Activated B cell treated with CpG ODN at 0.5 μM for 24 hours (primary cell): ENCODE measurements at regions of chr6 and their contacts with region 1.

Region 1: GRCh38 chr6:32622545-32623401 is 14.4 kb upstream of the HLA-DQA1 start:
- DNase-seq: peak; percentile 42
- ATAC-seq: peak; percentile 75
- H3K4me3 Mint-ChIP-seq: peak overlapping the region; percentile 80
- H3K27ac Mint-ChIP-seq: peak overlapping the region; percentile 100
- H3K4me1 Mint-ChIP-seq: peaks cover 75% of the 10 kb centered on the region
- H3K27me3 Mint-ChIP-seq: no peaks in the 10 kb centered on the region
- CTCF ChIP-seq: no peak

Region 2: GRCh38 chr6:32327103-32327502 is 295.7 kb before region 1 on chr6:
- CTCF ChIA-PET with region 1: no interaction called
- POLR2A ChIA-PET with region 1: no interaction called
- intact Hi-C with region 1: no loop called
- DNase-seq: no peak
- ATAC-seq: peak; percentile 89
- H3K4me3 Mint-ChIP-seq: peak overlapping the region; percentile 44
- H3K27ac Mint-ChIP-seq: peak overlapping the region; percentile 69
- H3K4me1 Mint-ChIP-seq: peaks cover 25% of the 10 kb centered on the region
- H3K27me3 Mint-ChIP-seq: no peaks in the 10 kb centered on the region
- CTCF ChIP-seq: no peak

Region 3: GRCh38 chr6:32432050-32432450 is 190.7 kb before region 1 on chr6:
- CTCF ChIA-PET with region 1: interaction called, 6 read pairs
- POLR2A ChIA-PET with region 1: interaction called, 5 read pairs
- intact Hi-C with region 1: loop called (anchors 1 kb)
- DNase-seq: no peak
- ATAC-seq: peak; percentile 43
- H3K4me3 Mint-ChIP-seq: no peak overlapping the region
- H3K27ac Mint-ChIP-seq: peak overlapping the region; percentile 24
- H3K4me1 Mint-ChIP-seq: peaks cover 33% of the 10 kb centered on the region
- H3K27me3 Mint-ChIP-seq: no peaks in the 10 kb centered on the region
- CTCF ChIP-seq: peak; percentile 65

Region 4: DNA sequence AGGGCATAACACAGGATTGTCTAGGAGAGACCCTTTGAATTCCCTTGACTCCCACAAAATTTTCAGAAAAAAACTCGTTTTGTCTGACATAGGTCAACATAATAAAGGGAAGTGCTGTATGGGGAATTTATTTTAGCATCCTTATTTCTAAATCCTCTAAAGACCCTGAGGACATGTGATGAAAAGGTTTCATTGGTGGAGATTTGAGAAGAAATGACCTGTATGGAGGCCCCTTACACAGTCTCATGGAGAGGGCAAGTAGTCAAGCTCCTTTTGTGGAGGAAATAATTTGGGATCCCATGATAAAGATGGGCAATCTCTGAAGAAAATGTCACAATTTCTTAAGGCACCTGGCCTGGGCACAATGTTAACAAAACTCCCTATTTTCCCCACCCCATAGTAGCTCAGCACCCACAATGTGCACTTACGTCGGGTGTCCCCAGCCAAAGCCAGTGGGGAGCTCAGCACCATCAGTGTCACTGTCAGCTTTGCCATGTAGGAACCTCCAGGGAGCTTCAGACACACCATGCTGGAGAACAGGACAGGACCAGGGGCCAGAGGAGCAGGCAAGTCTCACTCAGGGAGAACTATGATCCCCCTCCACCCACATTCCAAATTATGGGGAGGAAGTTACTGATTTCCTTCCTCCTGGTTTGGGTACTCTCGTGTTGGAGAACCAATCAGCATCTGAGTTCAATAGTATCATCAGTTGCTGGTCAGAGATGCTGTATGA is 92.9 kb before region 1 on chr6 and contains the start of gene HLA-DRB5:
- CTCF ChIA-PET with region 1: no interaction called
- POLR2A ChIA-PET with region 1: interaction called, 49 read pairs
- intact Hi-C with region 1: no loop called
- DNase-seq: peak; percentile 20
- ATAC-seq: peak; percentile 76
- H3K4me3 Mint-ChIP-seq: peak within 1 kb of the TSS; percentile 92
- H3K27ac Mint-ChIP-seq: peak within 1 kb of the TSS; percentile 99
- H3K4me1 Mint-ChIP-seq: peaks cover 28% of the 10 kb centered on the region
- H3K27me3 Mint-ChIP-seq: no peaks in the 10 kb centered on the region
- CTCF ChIP-seq: no peak
- total RNA-seq, gene HLA-DRB5: 196 and 199 TPM in 2 replicates

Region 5: GRCh38 chr6:32604434-32604877 is 18.3 kb before region 1 on chr6:
- CTCF ChIA-PET with region 1: interaction called, 4 read pairs
- POLR2A ChIA-PET with region 1: interaction called, 312 read pairs
- intact Hi-C with region 1: loop called (anchors 1 kb)
- DNase-seq: no peak
- ATAC-seq: peak; percentile 68
- H3K4me3 Mint-ChIP-seq: peak overlapping the region; percentile 74
- H3K27ac Mint-ChIP-seq: peak overlapping the region; percentile 93
- H3K4me1 Mint-ChIP-seq: peaks cover 76% of the 10 kb centered on the region
- H3K27me3 Mint-ChIP-seq: no peaks in the 10 kb centered on the region
- CTCF ChIP-seq: no peak

Region 6: DNA sequence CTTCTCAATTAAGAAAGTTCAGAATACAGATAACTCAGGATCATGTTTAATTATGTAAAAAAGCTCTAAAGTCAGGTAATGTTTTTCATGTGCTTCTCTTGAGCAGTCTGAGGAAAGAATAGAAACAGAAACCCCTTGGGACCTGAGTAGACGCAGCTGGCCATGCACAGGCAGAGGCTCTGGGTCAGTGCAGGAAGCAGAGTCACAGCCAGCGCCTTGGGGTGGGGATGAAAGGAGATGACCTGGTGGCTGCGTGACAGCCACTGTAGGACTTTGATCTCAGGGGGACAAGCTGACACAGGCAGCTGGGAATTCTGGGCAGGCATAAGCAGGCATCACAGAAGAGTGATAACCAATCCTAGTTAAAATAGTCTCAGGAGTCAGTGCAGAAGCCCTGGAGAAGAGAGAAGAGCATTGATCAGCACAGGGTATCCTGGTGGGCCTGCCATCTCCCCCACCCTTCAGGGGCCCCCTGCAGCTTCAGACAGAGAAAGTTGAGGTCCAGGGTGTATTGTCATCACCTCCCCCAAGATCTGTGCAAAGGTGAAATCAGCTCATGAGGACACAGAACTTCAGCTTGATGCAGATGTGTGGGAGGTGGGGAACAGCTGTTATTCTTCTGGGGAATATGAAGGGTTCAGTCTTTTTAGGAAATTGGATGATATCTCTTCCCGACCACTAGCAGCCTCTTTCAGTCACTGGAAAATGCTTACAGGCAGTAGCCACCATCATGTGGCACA is 37.3 kb after region 1 on chr6:
- CTCF ChIA-PET with region 1: no interaction called
- POLR2A ChIA-PET with region 1: interaction called, 47 read pairs
- intact Hi-C with region 1: loop called (anchors 1 kb)
- DNase-seq: no peak
- ATAC-seq: peak; percentile 83
- H3K4me3 Mint-ChIP-seq: peak overlapping the region; percentile 65
- H3K27ac Mint-ChIP-seq: peak overlapping the region; percentile 93
- H3K4me1 Mint-ChIP-seq: peaks cover 66% of the 10 kb centered on the region
- H3K27me3 Mint-ChIP-seq: no peaks in the 10 kb centered on the region
- CTCF ChIP-seq: no peak

Region 7: GRCh38 chr6:32692019-32692418 is 69.2 kb after region 1 on chr6:
- CTCF ChIA-PET with region 1: interaction called, 5 read pairs
- POLR2A ChIA-PET with region 1: interaction called, 37 read pairs
- intact Hi-C with region 1: loop called (anchors 1 kb)
- DNase-seq: no peak
- ATAC-seq: peak; percentile 49
- H3K4me3 Mint-ChIP-seq: peak overlapping the region; percentile 3
- H3K27ac Mint-ChIP-seq: peak overlapping the region; percentile 85
- H3K4me1 Mint-ChIP-seq: peaks cover 54% of the 10 kb centered on the region
- H3K27me3 Mint-ChIP-seq: no peaks in the 10 kb centered on the region
- CTCF ChIP-seq: no peak

Region 8: DNA sequence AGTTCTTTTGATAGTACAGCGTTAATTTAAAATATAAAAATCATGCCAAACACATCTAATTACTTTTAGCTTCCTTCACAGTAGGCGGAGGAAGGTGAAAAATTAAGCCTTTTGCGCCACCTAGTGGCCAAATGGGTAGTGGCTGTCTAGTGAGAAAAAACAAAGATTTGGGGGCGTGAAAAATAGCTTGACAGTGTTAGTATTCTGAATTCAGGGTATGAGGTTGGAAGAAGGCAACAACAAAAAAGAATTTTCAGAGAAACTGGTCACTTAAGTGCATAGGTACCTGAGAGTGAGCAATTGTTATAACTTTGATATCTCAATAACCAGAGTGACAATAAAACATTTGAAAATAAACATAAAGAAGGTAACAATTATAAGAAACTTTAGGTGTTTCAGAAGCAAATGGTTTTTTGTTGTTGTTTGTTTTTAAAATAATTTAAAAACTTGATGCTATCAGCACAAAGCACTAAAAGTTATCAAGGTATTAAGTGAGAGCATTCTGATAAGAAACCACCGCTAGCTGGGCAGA is 245.6 kb after region 1 on chr6:
- CTCF ChIA-PET with region 1: interaction called, 3 read pairs
- POLR2A ChIA-PET with region 1: interaction called, 11 read pairs
- intact Hi-C with region 1: no loop called
- DNase-seq: peak; percentile 70
- ATAC-seq: peak; percentile 66
- H3K4me3 Mint-ChIP-seq: no peak overlapping the region
- H3K27ac Mint-ChIP-seq: no peak overlapping the region
- H3K4me1 Mint-ChIP-seq: peaks cover 35% of the 10 kb centered on the region
- H3K27me3 Mint-ChIP-seq: no peaks in the 10 kb centered on the region
- CTCF ChIP-seq: peak; percentile 42